ACHN (cell line): ENCODE measurements at regions of chr5 and their contacts with region 1.

Region 1: DNA sequence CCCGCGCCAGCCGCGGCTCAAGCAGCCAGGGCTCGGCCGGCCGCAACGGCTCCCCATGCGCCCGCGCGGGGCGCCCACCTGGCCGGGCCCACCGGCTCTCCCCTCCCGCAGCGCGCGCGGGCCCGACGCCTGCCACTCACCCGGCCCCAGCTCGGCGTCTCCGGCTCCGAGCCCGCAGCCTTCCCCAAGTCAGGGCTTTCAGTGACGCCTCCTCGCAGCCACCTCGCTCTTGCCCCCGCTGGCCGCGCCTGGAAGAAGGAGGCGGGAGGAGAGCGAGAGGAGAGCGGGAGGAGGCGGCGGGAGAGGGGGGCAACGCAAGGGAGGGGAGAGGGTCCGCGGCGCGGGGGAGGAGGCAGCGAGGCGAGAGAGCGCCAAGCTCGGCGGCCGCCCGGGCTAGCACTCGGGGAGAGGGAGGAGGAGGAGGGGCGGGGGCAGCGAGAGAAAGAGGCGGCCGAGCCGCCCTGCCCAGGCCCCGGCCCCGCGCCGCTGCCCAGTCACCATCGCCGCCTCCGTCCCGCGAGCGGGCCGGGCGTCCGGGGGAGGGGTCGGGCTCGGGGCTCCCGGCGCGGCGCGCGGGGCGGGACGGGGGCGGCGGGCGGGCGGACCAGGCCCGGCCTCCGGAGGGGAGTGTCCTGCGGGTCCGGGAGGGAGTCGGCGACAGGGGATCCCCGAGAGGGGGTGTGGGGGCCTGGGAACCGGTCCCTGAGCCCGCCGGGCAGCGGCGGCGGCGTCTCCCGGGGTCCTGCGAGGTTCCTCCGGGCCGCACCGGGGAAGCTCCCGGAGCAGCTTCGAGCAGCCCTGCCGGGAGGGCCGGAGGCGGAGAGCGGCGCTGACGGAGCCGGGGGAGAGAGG is at the start of gene LHFPL2:
- DNase-seq: peak; percentile 71

Region 2: DNA sequence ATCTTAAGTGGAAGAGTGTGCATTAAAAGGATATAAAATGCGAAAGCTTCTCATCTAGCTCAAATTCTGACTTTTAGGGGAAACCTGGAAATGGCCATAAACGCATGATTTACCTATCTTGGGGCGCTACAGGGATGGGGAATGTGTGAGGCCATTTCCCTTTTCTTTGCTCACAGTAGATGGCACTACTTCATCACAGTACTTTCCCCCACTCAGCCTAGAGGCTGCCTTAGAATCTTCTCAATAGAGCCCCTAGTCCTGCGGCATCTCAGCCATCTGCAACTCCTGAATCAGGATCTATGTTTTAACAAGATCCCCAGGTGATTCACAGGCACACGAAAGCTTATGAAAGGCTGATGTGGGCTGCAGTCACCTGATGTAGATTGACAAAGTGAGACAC is 110.8 kb before region 1 on chr5:
- in situ Hi-C with region 1: loop called (anchors 25 kb)
- DNase-seq: peak; percentile 43